Ovary (tissue), 10 donors: ENCODE measurements at regions of chr3 and their contacts with region 1.

Region 1: DNA sequence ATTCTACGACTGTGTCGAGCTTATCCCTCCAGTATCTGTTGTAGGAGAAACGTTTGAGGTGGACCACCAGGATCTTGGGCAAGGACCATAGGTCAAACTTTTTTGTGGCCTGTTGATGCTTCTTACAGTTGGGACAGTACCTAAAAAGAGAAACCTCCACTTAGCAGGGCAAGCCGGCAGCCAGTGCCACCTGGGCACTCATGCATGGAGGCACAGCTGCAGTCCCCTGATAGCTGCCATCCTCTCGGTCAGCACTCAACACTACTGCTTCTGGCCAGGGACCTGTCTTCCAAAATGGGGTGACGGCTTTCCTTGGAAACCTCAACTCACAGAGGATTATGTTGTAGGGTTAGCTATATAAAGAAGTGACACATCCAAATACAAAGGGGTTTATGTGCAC is 7.0 kb upstream of the C3orf62 start:
- DNase-seq: no peak
- H3K4me3 ChIP-seq: no peak overlapping the region
- H3K27ac ChIP-seq: no peak overlapping the region
- H3K4me1 ChIP-seq: no peaks in the 10 kb centered on the region
- H3K27me3 ChIP-seq: no peaks in the 10 kb centered on the region
- CTCF ChIP-seq: no peak
- EP300 ChIP-seq: no peak
- POLR2A ChIP-seq: no peak

Region 2: GRCh38 chr3:49238274-49239127 is 45.5 kb before region 1 on chr3:
- intact Hi-C with region 1: loop called in 1 of 4 experiments (anchors 5 kb)
- DNase-seq: peak; percentile 54 to 82 (median 65)
- H3K4me3 ChIP-seq: no peak overlapping the region
- H3K27ac ChIP-seq: peak overlapping the region in 1 of 2 donors; percentile 82
- H3K4me1 ChIP-seq: peaks cover 2% of the 10 kb centered on the region
- H3K27me3 ChIP-seq: no peaks in the 10 kb centered on the region
- CTCF ChIP-seq: no peak
- EP300 ChIP-seq: peak; percentile 57
- POLR2A ChIP-seq: no peak

Region 3: DNA sequence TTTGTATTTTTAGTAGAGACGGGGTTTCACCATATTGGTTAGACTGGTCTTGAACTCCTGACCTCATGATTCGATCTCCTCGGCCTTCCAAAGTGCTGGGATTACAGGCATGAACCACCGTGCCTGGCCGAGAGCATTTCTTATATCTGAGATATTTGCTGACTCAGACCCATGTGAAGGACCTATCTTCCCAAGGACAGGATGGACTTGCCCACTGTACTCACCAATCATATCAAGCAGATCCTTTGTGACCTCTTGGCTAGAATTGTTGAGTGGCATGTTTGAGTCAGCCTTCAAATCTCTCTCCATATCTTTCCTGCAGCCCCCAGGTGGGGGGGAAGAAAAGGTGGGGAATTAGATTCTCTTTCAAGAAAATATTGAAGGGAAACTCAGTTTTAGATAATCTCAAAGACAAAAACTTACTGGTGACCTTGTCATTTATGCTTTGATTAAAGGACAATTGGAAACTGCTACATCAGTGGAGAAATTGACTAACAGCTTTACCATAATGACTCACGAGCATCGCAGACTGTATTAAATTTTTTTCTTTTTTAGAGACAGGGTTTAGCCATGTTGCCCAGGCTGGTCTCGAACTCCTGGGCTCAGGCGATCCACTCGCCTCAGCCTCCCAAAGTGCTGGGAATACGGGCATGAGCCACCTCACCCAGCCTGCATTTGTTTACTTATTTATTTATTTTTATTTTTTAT is 10.0 kb before region 1 on chr3:
- intact Hi-C with region 1: no loop called
- DNase-seq: no peak
- H3K4me3 ChIP-seq: no peak overlapping the region
- H3K27ac ChIP-seq: no peak overlapping the region
- H3K4me1 ChIP-seq: peaks cover 23% of the 10 kb centered on the region
- H3K27me3 ChIP-seq: no peaks in the 10 kb centered on the region
- CTCF ChIP-seq: no peak
- EP300 ChIP-seq: no peak
- POLR2A ChIP-seq: no peak

Region 4: DNA sequence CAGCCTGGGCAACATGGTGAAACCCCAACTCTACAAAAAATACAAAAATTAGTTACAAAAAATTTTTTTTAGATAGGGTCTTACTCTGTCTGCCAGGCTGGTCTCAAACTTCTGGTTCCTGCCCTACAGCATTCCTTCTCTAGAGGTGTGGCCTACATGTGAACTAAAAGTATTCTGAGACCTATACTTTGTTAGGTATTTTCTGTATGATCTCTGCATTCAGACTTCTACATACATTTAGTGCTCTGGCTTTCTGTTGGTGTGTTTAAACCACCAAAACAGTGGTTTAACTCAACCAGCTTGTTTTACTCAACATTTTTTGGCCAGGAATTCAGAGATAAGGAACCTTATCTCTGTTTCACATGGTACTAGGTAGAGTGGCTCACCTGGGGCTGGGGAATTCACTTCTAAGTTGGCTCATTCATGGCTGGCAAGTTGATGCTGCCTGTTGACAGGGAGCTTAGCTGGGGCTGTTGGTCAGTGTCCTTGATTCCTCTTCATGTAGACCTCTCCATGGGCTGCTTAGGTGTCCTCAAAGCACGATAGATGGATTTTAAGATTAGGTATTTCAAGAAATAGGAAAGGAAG is 228.9 kb after region 1 on chr3:
- intact Hi-C with region 1: no loop called
- DNase-seq: no peak
- H3K4me3 ChIP-seq: no peak overlapping the region
- H3K27ac ChIP-seq: no peak overlapping the region
- H3K4me1 ChIP-seq: no peaks in the 10 kb centered on the region
- H3K27me3 ChIP-seq: no peaks in the 10 kb centered on the region
- CTCF ChIP-seq: no peak
- EP300 ChIP-seq: no peak
- POLR2A ChIP-seq: no peak